Calu3 (cell line): ENCODE measurements at regions of chr20 and their contacts with region 1.

Region 1: DNA sequence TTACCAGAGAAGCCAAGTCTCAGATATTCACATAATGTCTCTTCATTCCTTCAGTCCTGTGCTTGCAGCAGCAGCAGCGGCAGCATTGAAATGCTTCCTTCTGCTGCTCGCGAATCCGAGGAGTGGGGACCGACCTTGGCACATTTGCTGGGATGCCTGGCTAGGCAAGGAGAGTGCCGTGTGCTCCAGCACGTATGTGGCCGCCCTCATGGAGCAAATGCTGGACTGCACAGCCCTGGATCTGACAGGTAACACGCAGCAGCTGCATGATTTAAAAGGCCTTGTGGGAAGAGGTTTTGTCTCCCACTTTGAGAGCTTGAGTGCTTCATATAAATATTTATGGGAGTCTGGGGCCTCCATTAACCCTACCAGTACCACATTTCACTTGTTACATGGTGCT is 9.9 kb downstream of the MAFB start:
- DNase-seq: no peak
- H3K4me3 Mint-ChIP-seq: no peak overlapping the region
- H3K27ac Mint-ChIP-seq: no peak overlapping the region
- H3K4me1 Mint-ChIP-seq: no peaks in the 10 kb centered on the region
- H3K27me3 Mint-ChIP-seq: peaks cover 94% of the 10 kb centered on the region
- CTCF ChIP-seq: no peak

Region 2: DNA sequence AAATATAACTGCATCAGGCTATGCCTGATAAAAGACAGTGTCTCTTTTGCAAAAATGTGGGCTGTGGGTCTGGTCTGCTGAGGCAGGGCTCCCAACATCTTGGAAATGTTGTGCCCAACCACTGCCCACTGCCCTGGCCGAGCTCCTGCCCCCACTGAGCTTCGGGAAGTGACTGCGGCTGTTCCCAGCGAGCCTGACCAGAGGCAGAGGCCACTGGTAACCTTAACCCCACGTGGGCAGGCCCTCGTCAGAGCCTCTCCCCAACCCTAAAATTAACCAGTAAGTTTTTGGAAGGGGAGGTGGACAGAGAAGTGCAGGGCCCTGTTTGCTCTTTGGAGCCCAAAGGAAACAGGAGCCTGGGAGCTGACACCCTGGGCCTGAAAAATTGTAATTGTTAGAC is 216.0 kb before region 1 on chr20:
- CTCF ChIA-PET with region 1: no interaction called
- intact Hi-C with region 1: no loop called
- DNase-seq: no peak
- H3K4me3 Mint-ChIP-seq: no peak overlapping the region
- H3K27ac Mint-ChIP-seq: no peak overlapping the region
- H3K4me1 Mint-ChIP-seq: no peaks in the 10 kb centered on the region
- H3K27me3 Mint-ChIP-seq: peaks cover 53% of the 10 kb centered on the region
- CTCF ChIP-seq: no peak

Region 3: GRCh38 chr20:40668449-40669228 is 10.5 kb before region 1 on chr20:
- CTCF ChIA-PET with region 1: interaction called, 13 read pairs
- intact Hi-C with region 1: no loop called
- DNase-seq: peak; percentile 40
- H3K4me3 Mint-ChIP-seq: no peak overlapping the region
- H3K27ac Mint-ChIP-seq: no peak overlapping the region
- H3K4me1 Mint-ChIP-seq: peaks cover 9% of the 10 kb centered on the region
- H3K27me3 Mint-ChIP-seq: peaks cover 3% of the 10 kb centered on the region
- CTCF ChIP-seq: no peak